ENCODE measurements at regions of chr1 and their contacts with region 1.

Region 1: GRCh38 chr1:81559662-81560350 is 240.9 kb upstream of the ADGRL2 start:
- DNase-seq: no peak
- CTCF ChIP-seq: no peak

Region 2: GRCh38 chr1:81549604-81550127 is 10.1 kb before region 1 on chr1:
- CTCF ChIA-PET with region 1: interaction called, 19 read pairs
- POLR2A ChIA-PET with region 1: no interaction called
- DNase-seq: peak; percentile 18
- CTCF ChIP-seq: peak; percentile 48

Measured in GM10248 (cell line).